Left colon (tissue), 2 donors: ENCODE measurements at regions of chr1 and their contacts with region 1.

Region 1: GRCh38 chr1:180863158-180863775 is 49.4 kb upstream of the KIAA1614 start:
- DNase-seq: no peak
- ATAC-seq: peak; percentile 46

Region 2: DNA sequence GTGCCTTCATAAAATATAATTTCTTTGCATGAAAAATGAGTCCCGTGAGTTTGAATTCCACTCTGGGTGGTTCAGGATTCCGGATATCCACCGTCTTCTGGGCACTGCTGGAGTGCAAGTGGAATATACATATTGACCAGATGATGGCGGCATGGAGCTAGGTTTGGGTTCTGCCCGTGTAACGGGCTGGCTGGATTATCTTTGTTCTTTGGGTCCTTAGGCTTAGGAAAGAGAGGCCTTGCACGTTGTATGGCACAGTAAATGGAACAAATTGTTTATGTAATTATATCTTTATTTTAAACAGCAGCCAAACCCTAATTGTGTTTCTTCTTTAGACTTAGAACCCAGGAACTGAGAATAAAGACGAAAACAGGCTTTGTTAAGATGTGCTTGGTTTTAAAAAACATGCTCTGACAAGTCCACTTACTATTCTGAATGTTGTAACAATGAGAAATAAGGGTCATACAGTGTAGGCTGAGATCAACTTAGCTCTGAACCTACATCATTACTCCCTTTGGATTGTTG is 347.3 kb before region 1 on chr1:
- intact Hi-C with region 1: loop called (anchors 5 to 10 kb)
- DNase-seq: peak in 1 of 2 donors; percentile 50
- ATAC-seq: peak; percentile 90

Region 3: DNA sequence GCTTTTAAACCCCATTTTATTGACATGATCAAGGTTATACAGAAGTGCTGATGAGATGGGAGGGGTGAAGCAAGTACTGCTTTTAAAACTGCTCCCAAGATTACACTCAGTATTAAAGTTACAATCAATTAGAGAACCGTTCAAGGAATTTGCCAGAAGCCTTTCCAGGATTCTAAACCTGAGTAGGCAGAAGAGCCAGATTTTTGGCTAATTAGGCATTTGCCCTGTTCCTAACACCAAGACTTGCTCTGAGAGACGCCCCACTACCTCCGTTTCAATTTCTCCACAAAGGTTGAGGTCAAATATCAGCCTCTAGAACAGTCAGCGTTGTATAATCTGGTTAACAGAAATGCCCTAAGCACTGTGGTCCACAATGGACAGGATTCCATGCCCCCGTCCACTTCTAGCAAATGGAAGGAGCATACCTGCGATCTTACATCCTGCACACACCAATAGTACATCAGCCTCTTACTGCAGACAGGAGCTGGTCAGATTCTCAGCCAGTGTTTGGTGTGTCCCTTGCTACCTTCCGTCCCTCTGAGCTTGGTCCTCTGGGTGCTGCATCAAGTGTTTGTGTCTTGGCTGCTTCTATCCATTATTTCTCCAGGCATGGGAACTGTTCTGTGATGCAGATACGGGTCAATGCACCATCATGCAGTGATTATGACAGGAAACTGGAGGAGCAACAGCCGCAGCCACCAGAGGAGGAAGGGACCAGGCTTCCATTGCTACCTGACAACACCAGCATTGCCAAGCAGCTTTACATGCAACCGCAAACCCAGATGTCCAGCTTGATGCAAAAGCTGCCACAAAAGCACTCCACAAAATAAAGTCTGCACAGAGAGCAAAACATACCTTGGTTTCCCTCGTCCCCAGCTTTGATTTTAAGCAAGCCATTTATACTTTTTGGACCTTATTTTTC is 326.6 kb before region 1 on chr1:
- intact Hi-C with region 1: loop called in 1 of 2 experiments (anchors 5 kb)
- DNase-seq: no peak
- ATAC-seq: no peak

Region 4: GRCh38 chr1:180631766-180632325 is 231.4 kb before region 1 on chr1 and contains the start of gene XPR1:
- intact Hi-C with region 1: loop called in 1 of 2 experiments (anchors 5 kb)
- DNase-seq: peak; percentile 98 to 99
- ATAC-seq: peak; percentile 97
- total RNA-seq, gene XPR1: 32.6 to 60.2 TPM